K562 (cell line): ENCODE measurements at regions of chr20 and their contacts with region 1.

Region 1: DNA sequence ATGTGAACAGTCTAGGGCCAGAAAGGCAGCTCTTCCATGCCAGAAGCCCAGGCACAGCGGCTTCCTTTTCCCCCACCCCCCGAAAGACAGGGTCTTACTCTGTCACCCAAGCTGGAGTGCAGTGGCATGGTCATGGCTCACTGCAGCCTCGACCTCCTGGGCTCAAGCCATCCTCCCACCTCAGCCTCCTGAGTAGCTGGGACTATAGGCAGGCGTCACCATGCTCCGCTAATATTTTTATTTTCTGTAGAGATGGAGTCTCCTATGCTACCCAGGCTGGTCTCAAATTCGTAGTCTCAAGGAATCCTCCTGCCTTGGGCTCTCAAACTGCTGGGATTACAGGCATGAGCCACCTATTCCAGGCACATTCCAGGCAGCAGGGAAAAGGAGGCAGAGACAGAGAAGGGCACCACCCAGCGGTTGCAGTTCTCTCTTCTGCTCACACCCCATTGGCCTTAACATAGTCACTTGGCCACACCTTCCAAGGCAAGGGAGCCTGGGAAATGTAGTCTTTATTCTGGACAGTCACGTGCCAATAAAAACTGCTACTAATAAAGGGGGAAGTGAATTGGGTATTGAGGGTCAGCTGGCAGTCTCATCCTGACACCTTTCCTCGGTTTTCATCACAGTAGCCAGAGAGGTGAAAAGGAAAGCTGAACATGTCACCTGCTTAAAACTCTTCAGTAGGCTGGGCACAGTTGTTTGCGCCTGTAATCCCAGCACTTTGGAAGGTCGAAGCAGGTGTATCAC is 205.9 kb downstream of the ZMYND8 start:
- DNase-seq: peak; percentile 74 to 83 (median 79)
- ATAC-seq: peak; percentile 100
- H3K4me3 ChIP-seq: no peak overlapping the region
- H3K27ac ChIP-seq: no peak overlapping the region
- H3K4me1 ChIP-seq: no peaks in the 10 kb centered on the region
- H3K27me3 ChIP-seq: peaks cover 22 to 47% of the 10 kb centered on the region in 2 experiments
- CTCF ChIP-seq: peak; percentile 75 to 86 (median 82)
- EP300 ChIP-seq: no peak
- POLR2A ChIP-seq: no peak
- RAD21 ChIP-seq: peak; percentile 43 to 79

Region 2: GRCh38 chr20:46772901-46773300 is 377.7 kb before region 1 on chr20:
- CTCF ChIA-PET with region 1: no interaction called
- POLR2A ChIA-PET with region 1: no interaction called
- in situ Hi-C with region 1: no loop called
- intact Hi-C with region 1: loop called (anchors 5 kb)
- DNase-seq: peak; percentile 25 to 40 (median 36)
- ATAC-seq: peak; percentile 59; the same call in 2 of the 3 replicates
- H3K4me3 ChIP-seq: no peak overlapping the region
- H3K27ac ChIP-seq: no peak overlapping the region
- H3K4me1 ChIP-seq: no peaks in the 10 kb centered on the region
- H3K27me3 ChIP-seq: peaks cover 0 to 21% of the 10 kb centered on the region in 2 experiments; a peak in 3 of 5 replicates
- CTCF ChIP-seq: peak; percentile 30 to 55 (median 54); a peak in 4 of 6 replicates
- EP300 ChIP-seq: no peak
- POLR2A ChIP-seq: no peak
- RAD21 ChIP-seq: peak in 1 of 2 experiments; percentile 52; a peak in 2 of 4 replicates

Region 3: DNA sequence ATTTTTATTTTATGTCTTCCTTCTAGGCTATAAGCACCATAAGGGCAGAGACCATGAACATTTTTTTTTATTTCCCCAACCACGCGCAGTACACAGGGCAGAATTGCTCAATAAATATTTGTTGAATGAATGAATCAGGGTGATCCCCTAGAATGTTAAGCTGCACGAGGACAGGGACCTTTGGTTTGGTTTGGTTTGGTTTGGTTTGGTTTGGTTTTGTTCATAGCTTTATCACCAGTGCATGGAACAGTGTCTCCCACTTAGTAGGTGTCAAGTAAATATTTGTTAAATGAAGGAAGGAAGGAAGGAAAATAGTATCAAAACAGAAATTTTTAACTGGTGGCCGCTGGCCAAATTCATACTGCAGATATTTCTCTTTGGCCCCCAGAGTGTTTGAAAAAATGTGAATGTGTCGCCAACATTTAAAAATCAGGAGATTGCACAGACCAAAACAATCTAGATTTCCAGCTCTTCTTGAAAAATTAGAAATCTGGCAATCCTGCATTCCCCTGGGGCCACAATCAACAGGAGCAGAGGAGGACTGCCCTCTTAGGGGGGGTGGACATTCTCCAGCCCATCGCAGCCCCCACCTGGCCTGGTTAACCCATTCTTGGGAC is 50.6 kb before region 1 on chr20:
- CTCF ChIA-PET with region 1: no interaction called
- POLR2A ChIA-PET with region 1: no interaction called
- in situ Hi-C with region 1: no loop called
- intact Hi-C with region 1: no loop called
- DNase-seq: no peak
- ATAC-seq: no peak
- H3K4me3 ChIP-seq: no peak overlapping the region
- H3K27ac ChIP-seq: no peak overlapping the region
- H3K4me1 ChIP-seq: no peaks in the 10 kb centered on the region
- H3K27me3 ChIP-seq: peaks cover 7 to 8% of the 10 kb centered on the region in 2 experiments; a peak in 3 of 5 replicates
- CTCF ChIP-seq: no peak
- EP300 ChIP-seq: no peak
- POLR2A ChIP-seq: no peak
- RAD21 ChIP-seq: no peak